CD14-positive monocyte (primary cell): ENCODE measurements at regions of chr4 and their contacts with region 1.

Region 1: DNA sequence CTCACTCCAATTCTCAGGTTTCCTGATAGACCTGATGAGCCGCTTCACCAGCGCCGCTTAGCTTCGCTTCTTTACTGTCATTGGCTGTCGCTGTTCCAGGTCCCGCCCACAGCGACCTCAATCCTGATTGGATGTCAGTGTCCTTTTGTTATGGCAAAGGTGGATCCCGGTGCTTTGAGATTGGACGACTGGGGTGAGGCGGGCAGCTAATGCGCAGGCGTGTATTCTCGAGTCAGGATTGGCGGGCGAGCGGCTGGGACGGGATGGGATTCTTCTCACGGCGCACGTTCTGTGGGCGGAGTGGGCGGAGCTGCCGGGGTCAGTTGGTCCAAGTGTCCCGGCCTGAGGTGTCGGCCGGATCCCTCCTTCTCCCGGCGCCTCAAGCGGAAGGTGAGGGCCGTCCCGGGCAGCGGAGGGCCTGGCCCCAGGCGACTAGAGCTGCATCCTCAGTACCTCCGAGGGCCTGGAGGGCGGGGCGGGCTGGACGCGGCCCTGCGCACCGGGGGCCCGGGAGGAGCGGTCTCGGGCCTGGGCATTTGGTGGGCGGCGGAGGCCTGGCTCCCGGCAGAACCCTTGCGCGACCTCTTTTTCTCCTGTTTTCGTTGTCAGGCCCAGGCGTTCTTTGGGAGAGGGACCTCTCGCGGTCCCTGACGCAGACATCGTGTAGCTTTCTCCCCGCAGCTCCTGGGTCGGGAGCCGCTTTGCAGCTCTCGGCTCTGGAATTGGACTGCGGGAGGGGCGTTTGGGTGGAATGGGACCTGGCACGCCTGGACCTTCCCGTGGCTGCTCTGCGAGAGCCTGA is at the start of gene SCOC:
- DNase-seq: peak; percentile 96 to 98 (median 96)
- H3K4me3 ChIP-seq: peak within 1 kb of the TSS; percentile 74 to 86 (median 85)
- H3K4me3 Mint-ChIP-seq: no peak within 1 kb of the TSS
- H3K27ac ChIP-seq: peak within 1 kb of the TSS; percentile 40 to 75
- H3K27ac Mint-ChIP-seq: peak within 1 kb of the TSS in 5 of 7 donors; percentile 28 to 82 (median 50)
- H3K4me1 ChIP-seq: peaks cover 15 to 16% of the 10 kb centered on the region in 2 donors
- H3K4me1 Mint-ChIP-seq: peaks cover 22% of the 10 kb centered on the region
- H3K27me3 ChIP-seq: no peaks in the 10 kb centered on the region
- H3K27me3 Mint-ChIP-seq: no peaks in the 10 kb centered on the region
- CTCF ChIP-seq: no peak
- polyA plus RNA-seq, gene SCOC: 5.3 to 22.6 (median 21.2) TPM

Region 2: DNA sequence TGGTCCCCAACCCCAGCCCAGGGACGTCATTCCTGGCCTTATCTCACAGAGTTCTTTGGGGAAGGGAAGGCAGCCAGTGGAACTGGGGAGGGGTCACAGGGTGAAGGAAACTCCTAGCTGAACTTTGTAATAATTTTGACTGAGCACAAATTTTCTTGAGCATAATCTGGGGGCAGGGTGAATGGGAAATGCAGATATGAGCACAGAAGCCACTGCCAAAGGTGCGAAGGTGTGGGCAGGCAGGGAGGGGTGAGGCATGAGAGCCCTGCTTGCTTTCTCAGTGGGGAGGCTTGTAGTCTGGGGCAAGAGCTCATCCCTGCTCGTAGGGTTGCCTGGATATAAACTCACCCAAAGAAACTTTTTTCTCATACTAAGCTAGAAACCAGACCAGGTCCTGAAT is 89.7 kb after region 1 on chr4:
- intact Hi-C with region 1: no loop called
- DNase-seq: no peak
- H3K4me3 ChIP-seq: no peak overlapping the region
- H3K4me3 Mint-ChIP-seq: no peak overlapping the region
- H3K27ac ChIP-seq: no peak overlapping the region
- H3K27ac Mint-ChIP-seq: peak overlapping the region in 1 of 7 donors; percentile 57
- H3K4me1 ChIP-seq: peaks cover 3 to 9% of the 10 kb centered on the region in 2 donors
- H3K4me1 Mint-ChIP-seq: peaks cover 11% of the 10 kb centered on the region
- H3K27me3 ChIP-seq: no peaks in the 10 kb centered on the region
- H3K27me3 Mint-ChIP-seq: peaks cover 0 to 2% (median 0%) of the 10 kb centered on the region in 3 donors
- CTCF ChIP-seq: no peak

Region 3: DNA sequence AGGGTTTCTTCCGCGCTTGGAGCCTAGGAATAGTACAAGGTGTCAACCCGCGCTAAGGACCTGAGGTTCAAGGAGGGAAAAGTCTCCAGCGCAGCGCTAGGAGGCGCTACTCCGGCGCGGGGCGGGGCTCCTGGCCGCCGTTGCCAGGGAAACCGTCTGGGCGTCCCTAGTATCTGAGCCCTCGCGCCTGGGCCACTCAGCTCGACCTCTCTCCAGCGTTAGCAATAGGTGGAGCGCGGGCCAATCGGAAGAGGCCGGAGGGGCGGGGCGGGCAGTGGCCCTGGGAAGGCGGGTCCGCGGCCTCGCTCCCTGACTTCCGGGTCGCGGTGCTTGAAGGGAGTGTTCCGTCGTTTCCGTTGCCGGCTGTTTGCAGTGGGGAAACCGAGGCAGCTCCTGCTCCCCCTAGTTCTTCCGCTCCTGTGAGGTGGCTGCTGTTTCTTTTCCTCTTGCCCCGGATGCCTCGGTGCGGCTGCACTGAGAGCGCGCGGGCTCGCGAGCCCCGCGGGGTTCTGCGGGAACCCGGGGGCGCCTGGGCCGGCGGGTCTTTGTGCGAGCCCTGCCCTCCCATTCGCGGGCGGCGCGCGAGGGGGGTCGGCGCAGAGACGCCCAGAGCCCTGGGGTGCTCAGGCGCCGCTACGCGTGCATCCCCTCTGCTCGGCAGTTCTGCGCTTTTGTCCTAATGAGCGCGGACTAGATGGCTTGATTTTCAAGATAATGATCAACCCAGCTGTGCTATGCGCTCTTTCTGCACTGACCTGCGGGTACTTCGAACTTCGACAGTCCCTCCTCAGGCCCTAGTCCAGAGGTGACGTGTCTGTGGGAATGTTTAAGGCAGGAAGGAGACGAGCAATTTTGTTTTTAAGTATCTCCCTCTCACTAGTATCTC is 150.6 kb after region 1 on chr4 and contains the start of gene ELMOD2:
- intact Hi-C with region 1: loop called (anchors 5 kb)
- DNase-seq: peak; percentile 96 to 97 (median 97)
- H3K4me3 ChIP-seq: peak within 1 kb of the TSS; percentile 63 to 93 (median 82)
- H3K4me3 Mint-ChIP-seq: peak within 1 kb of the TSS; percentile 82 to 95
- H3K27ac ChIP-seq: peak within 1 kb of the TSS; percentile 38 to 91
- H3K27ac Mint-ChIP-seq: peak within 1 kb of the TSS; percentile 83 to 95 (median 89)
- H3K4me1 ChIP-seq: peaks cover 12 to 15% of the 10 kb centered on the region in 2 donors
- H3K4me1 Mint-ChIP-seq: peaks cover 12% of the 10 kb centered on the region
- H3K27me3 ChIP-seq: no peaks in the 10 kb centered on the region
- H3K27me3 Mint-ChIP-seq: peaks cover 0 to 2% (median 2%) of the 10 kb centered on the region in 3 donors
- CTCF ChIP-seq: peak; percentile 91
- polyA plus RNA-seq, gene ELMOD2: 4.0 to 7.6 (median 4.9) TPM